Astrocyte of the cerebellum (primary cell): ENCODE measurements at regions of chr12 and their contacts with region 1.

Region 1: DNA sequence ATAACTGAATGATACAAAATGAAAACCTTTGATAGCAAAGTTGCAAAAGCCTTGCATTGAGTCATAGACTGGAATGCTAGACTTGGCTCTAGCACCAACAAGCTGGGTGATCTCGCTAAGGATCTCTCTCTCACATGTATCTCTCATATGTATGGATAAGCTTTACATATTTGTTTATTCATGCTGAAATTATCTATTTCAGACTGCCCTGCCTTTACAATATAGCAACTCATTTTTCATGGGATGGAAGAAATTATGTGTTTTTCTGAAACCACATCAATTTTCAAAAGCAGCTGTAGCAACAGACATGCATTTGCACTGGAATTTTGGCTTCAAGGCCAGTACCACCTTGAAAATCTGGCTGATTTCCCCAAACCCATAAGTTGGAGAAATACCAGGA is 11.4 kb downstream of the RERG start:
- DNase-seq: peak; percentile 93
- H3K4me3 ChIP-seq: no peak overlapping the region
- CTCF ChIP-seq: no peak

Region 2: GRCh38 chr12:15155271-15155670 is 54.5 kb before region 1 on chr12:
- in situ Hi-C with region 1: loop called (anchors 5 kb)
- DNase-seq: no peak
- H3K4me3 ChIP-seq: no peak overlapping the region
- CTCF ChIP-seq: no peak

Region 3: DNA sequence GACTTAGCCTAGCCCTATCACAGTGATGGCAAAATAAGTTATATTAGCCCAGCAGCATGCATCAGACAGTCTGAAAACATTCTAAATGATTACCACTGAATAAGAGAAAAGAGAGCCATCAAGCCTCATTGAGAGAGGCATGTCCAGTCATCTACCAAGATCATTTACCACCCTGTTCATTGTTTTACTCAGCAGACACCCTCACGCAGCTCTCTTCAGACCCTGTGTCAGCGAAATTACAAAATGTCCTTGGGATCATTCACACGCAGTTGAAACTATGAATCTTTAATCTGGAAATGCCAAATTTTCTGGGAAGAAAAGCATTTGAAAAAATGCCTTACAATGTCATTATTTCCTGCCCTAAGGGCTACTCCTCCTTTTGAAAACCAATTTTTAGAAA is 202.1 kb after region 1 on chr12:
- in situ Hi-C with region 1: no loop called
- DNase-seq: no peak
- H3K4me3 ChIP-seq: no peak overlapping the region
- CTCF ChIP-seq: no peak